ENCODE measurements at regions of chr9 and their contacts with region 1.

Region 1: GRCh38 chr9:77261605-77262004 is 84.3 kb downstream of the VPS13A start:
- DNase-seq: no peak
- H3K4me3 ChIP-seq: no peak overlapping the region
- H3K27ac ChIP-seq: no peak overlapping the region
- H3K4me1 ChIP-seq: no peaks in the 10 kb centered on the region
- H3K27me3 ChIP-seq: no peaks in the 10 kb centered on the region
- CTCF ChIP-seq: no peak
- POLR2A ChIP-seq: no peak

Region 2: GRCh38 chr9:77210116-77210515 is 51.5 kb before region 1 on chr9:
- intact Hi-C with region 1: loop called (anchors 10 kb)
- DNase-seq: no peak
- H3K4me3 ChIP-seq: no peak overlapping the region
- H3K27ac ChIP-seq: no peak overlapping the region
- H3K4me1 ChIP-seq: no peaks in the 10 kb centered on the region
- H3K27me3 ChIP-seq: no peaks in the 10 kb centered on the region
- CTCF ChIP-seq: no peak
- POLR2A ChIP-seq: no peak

Region 3: GRCh38 chr9:77304543-77304942 is 42.9 kb after region 1 on chr9:
- intact Hi-C with region 1: no loop called
- DNase-seq: no peak
- H3K4me3 ChIP-seq: no peak overlapping the region
- H3K27ac ChIP-seq: no peak overlapping the region
- H3K4me1 ChIP-seq: no peaks in the 10 kb centered on the region
- H3K27me3 ChIP-seq: no peaks in the 10 kb centered on the region
- CTCF ChIP-seq: no peak
- POLR2A ChIP-seq: no peak